Activated CD4-positive, alpha-beta T cell treated with anti-CD3 and anti-CD28 coated beads for 36 hours (primary cell): ENCODE measurements at regions of chrX and their contacts with region 1.

Region 1: DNA sequence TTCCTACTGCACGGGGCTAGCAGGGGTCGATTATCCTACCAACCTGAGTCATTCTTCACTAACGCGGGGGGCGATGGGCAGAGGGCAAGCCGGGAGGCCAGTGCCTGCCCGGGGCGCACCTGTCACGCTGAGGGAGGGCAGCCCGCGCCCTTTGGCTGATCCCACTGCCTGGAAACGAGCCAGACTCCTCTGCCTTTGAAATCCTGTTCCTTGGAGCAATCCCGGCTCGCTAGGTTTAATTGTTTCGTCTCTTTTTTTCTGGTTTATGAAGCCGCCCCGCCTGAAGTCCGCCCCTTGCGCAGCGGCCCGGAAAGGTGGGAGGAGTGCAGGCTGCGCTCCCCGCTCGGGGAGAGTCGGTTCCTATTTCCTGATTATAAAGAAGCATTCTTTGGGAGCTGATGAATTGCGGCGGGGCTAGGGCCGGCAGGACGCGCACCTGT is 484.3 kb downstream of the BCOR start:
- DNase-seq: peak; percentile 47
- ATAC-seq: peak; percentile 30
- H3K4me3 Mint-ChIP-seq: peak overlapping the region; percentile 77
- H3K27ac Mint-ChIP-seq: peak overlapping the region; percentile 89
- H3K4me1 Mint-ChIP-seq: peaks cover 33% of the 10 kb centered on the region
- H3K27me3 Mint-ChIP-seq: no peaks in the 10 kb centered on the region

Region 2: GRCh38 chrX:39261446-39262147 is 351.9 kb before region 1 on chrX:
- CTCF ChIA-PET with region 1: no interaction called
- POLR2A ChIA-PET with region 1: no interaction called
- intact Hi-C with region 1: loop called in 1 of 2 experiments (anchors 5 kb)
- DNase-seq: peak; percentile 25
- ATAC-seq: peak; percentile 78
- H3K4me3 Mint-ChIP-seq: no peak overlapping the region
- H3K27ac Mint-ChIP-seq: peak overlapping the region; percentile 32
- H3K4me1 Mint-ChIP-seq: peaks cover 52% of the 10 kb centered on the region
- H3K27me3 Mint-ChIP-seq: no peaks in the 10 kb centered on the region

Region 3: GRCh38 chrX:39309018-39309635 is 304.4 kb before region 1 on chrX:
- CTCF ChIA-PET with region 1: no interaction called
- POLR2A ChIA-PET with region 1: no interaction called
- intact Hi-C with region 1: loop called in 1 of 2 experiments (anchors 5 kb)
- DNase-seq: peak; percentile 77
- ATAC-seq: peak; percentile 86
- H3K4me3 Mint-ChIP-seq: peak overlapping the region; percentile 51
- H3K27ac Mint-ChIP-seq: peak overlapping the region; percentile 100
- H3K4me1 Mint-ChIP-seq: peaks cover 77% of the 10 kb centered on the region
- H3K27me3 Mint-ChIP-seq: no peaks in the 10 kb centered on the region

Region 4: DNA sequence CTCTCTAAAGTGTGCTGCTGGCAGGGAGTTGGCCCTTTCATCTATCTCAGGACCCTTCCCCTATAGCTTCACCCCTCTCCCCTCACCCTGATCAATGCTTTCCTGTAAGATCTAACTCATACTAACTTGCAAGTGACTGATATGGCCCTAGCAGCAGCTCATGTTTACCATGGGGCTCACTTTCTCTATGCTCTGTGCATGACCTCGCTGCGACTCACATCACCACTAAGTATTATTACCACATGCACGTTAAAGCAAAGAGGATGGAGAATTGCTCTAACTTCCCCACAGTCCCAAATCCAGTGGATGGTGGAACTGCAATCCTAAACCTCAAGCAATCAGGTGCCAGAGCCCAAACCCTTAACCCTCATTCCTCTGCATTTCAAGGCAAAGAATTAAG is 185.6 kb before region 1 on chrX:
- CTCF ChIA-PET with region 1: no interaction called
- POLR2A ChIA-PET with region 1: no interaction called
- intact Hi-C with region 1: loop called in 1 of 2 experiments (anchors 1 kb)
- DNase-seq: peak; percentile 73
- ATAC-seq: peak; percentile 71
- H3K4me3 Mint-ChIP-seq: no peak overlapping the region
- H3K27ac Mint-ChIP-seq: peak overlapping the region; percentile 82
- H3K4me1 Mint-ChIP-seq: peaks cover 73% of the 10 kb centered on the region
- H3K27me3 Mint-ChIP-seq: no peaks in the 10 kb centered on the region

Region 5: DNA sequence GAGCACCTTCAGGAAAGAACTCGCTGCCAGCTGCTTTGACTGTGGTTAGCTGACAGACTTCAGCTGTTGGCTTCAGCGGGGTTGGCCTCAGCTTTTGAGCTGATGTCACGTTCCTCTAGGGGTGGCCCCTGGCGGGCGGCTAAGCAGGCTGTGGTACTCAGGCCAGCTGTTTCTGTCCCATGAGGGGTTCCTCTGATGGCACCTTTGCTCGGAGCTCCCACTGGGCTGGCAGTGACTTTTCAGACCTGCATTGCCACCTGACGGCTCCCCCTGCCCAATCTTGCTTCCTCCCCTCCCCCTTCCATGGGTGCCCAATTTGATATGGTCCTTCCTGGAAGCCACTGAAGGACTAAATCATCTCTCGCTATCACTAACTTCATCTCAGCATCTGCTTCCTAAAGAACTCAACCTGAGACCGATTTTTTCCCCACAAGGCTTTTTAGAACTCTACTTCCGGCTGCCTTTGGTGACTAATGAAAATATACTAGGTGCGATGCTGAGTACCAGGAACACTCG is 35.1 kb before region 1 on chrX:
- CTCF ChIA-PET with region 1: no interaction called
- POLR2A ChIA-PET with region 1: no interaction called
- intact Hi-C with region 1: loop called (anchors 1 kb)
- DNase-seq: peak; percentile 83
- ATAC-seq: peak; percentile 91
- H3K4me3 Mint-ChIP-seq: peak overlapping the region; percentile 35
- H3K27ac Mint-ChIP-seq: peak overlapping the region; percentile 84
- H3K4me1 Mint-ChIP-seq: peaks cover 28% of the 10 kb centered on the region
- H3K27me3 Mint-ChIP-seq: no peaks in the 10 kb centered on the region

Region 6: GRCh38 chrX:39883666-39884065 is 270.2 kb after region 1 on chrX:
- CTCF ChIA-PET with region 1: no interaction called
- POLR2A ChIA-PET with region 1: interaction called, 3 read pairs
- intact Hi-C with region 1: loop called in 1 of 2 experiments (anchors 1 kb)
- DNase-seq: peak; percentile 72
- ATAC-seq: peak; percentile 96
- H3K4me3 Mint-ChIP-seq: no peak overlapping the region
- H3K27ac Mint-ChIP-seq: peak overlapping the region; percentile 78
- H3K4me1 Mint-ChIP-seq: peaks cover 19% of the 10 kb centered on the region
- H3K27me3 Mint-ChIP-seq: peaks cover 2% of the 10 kb centered on the region